PC-9 (cell line): ENCODE measurements at regions of chr9 and their contacts with region 1.

Region 1: DNA sequence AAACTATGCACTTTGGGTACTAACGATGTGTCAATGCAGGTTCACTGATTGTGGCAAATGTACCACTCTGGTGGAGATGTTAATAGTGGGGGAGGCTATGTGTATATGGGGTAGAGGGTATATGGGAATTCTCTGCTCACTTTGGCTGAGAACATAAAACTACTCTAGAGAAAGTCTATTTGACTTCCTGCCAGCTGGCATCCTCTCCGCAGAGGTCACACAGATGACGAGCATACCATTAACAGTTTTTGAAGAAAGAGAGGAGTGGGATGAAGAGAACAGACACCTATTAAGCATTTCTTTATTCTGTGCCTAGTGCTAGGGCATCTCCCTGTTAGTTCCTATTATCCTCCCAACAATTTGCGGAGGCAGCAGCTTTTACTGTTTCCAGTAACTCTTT is 58.4 kb upstream of the TRIM32 start:
- DNase-seq: no peak
- H3K4me3 ChIP-seq: no peak overlapping the region
- H3K27ac ChIP-seq: no peak overlapping the region
- H3K4me1 ChIP-seq: no peaks in the 10 kb centered on the region
- H3K27me3 ChIP-seq: no peaks in the 10 kb centered on the region
- CTCF ChIP-seq: no peak

Region 2: GRCh38 chr9:116494815-116495634 is 133.7 kb before region 1 on chr9:
- CTCF ChIA-PET with region 1: no interaction called
- POLR2A ChIA-PET with region 1: no interaction called
- intact Hi-C with region 1: no loop called
- DNase-seq: peak in 1 of 2 experiments; percentile 16
- H3K4me3 ChIP-seq: no peak overlapping the region
- H3K27ac ChIP-seq: no peak overlapping the region
- H3K4me1 ChIP-seq: no peaks in the 10 kb centered on the region
- H3K27me3 ChIP-seq: no peaks in the 10 kb centered on the region
- CTCF ChIP-seq: peak; percentile 79

Region 3: GRCh38 chr9:116589392-116590354 is 39.0 kb before region 1 on chr9:
- CTCF ChIA-PET with region 1: interaction called, 18 read pairs
- POLR2A ChIA-PET with region 1: no interaction called
- intact Hi-C with region 1: no loop called
- DNase-seq: peak in 1 of 2 experiments; percentile 37
- H3K4me3 ChIP-seq: no peak overlapping the region
- H3K27ac ChIP-seq: no peak overlapping the region
- H3K4me1 ChIP-seq: no peaks in the 10 kb centered on the region
- H3K27me3 ChIP-seq: no peaks in the 10 kb centered on the region
- CTCF ChIP-seq: peak; percentile 63

Region 4: GRCh38 chr9:116605904-116606341 is 22.8 kb before region 1 on chr9:
- CTCF ChIA-PET with region 1: no interaction called
- POLR2A ChIA-PET with region 1: no interaction called
- intact Hi-C with region 1: no loop called
- DNase-seq: no peak
- H3K4me3 ChIP-seq: no peak overlapping the region
- H3K27ac ChIP-seq: no peak overlapping the region
- H3K4me1 ChIP-seq: no peaks in the 10 kb centered on the region
- H3K27me3 ChIP-seq: no peaks in the 10 kb centered on the region
- CTCF ChIP-seq: no peak